ENCODE measurements at regions of chr3 and their contacts with region 1.

Region 1: GRCh38 chr3:195909644-195910508 is 1.5 kb upstream of the TNK2 start:
- DNase-seq: peak; percentile 79 to 95 (median 90)
- ATAC-seq: peak; percentile 61
- H3K4me3 ChIP-seq: peak overlapping the region; percentile 32 to 52
- H3K4me3 Mint-ChIP-seq: peak overlapping the region; percentile 77
- H3K27ac ChIP-seq: peak overlapping the region; percentile 35 to 51
- H3K27ac Mint-ChIP-seq: peak overlapping the region; percentile 78
- H3K4me1 ChIP-seq: peaks cover 37% of the 10 kb centered on the region
- H3K4me1 Mint-ChIP-seq: peaks cover 36% of the 10 kb centered on the region
- H3K27me3 ChIP-seq: no peaks in the 10 kb centered on the region
- H3K27me3 Mint-ChIP-seq: no peaks in the 10 kb centered on the region
- CTCF ChIP-seq: no peak

Region 2: GRCh38 chr3:195748661-195749060 is 161.2 kb before region 1 on chr3:
- CTCF ChIA-PET with region 1: no interaction called
- POLR2A ChIA-PET with region 1: interaction called, 3 read pairs
- intact Hi-C with region 1: loop called in 1 of 2 experiments (anchors 5 kb)
- DNase-seq: peak in 1 of 9 experiments; percentile 25
- ATAC-seq: no peak
- H3K4me3 ChIP-seq: no peak overlapping the region
- H3K4me3 Mint-ChIP-seq: no peak overlapping the region
- H3K27ac ChIP-seq: no peak overlapping the region
- H3K27ac Mint-ChIP-seq: no peak overlapping the region
- H3K4me1 ChIP-seq: peaks cover 9% of the 10 kb centered on the region
- H3K4me1 Mint-ChIP-seq: peaks cover 9% of the 10 kb centered on the region
- H3K27me3 ChIP-seq: peaks cover 0 to 4% of the 10 kb centered on the region in 2 experiments
- H3K27me3 Mint-ChIP-seq: peaks cover 6% of the 10 kb centered on the region
- CTCF ChIP-seq: no peak

Region 3: GRCh38 chr3:195863121-195864006 is 46.5 kb before region 1 on chr3:
- CTCF ChIA-PET with region 1: interaction called, 208 read pairs
- POLR2A ChIA-PET with region 1: interaction called, 4 read pairs
- intact Hi-C with region 1: loop called (anchors 1 kb)
- DNase-seq: peak; percentile 36 to 77 (median 66)
- ATAC-seq: peak; percentile 78
- H3K4me3 ChIP-seq: no peak overlapping the region
- H3K4me3 Mint-ChIP-seq: no peak overlapping the region
- H3K27ac ChIP-seq: no peak overlapping the region
- H3K27ac Mint-ChIP-seq: no peak overlapping the region
- H3K4me1 ChIP-seq: peaks cover 4% of the 10 kb centered on the region
- H3K4me1 Mint-ChIP-seq: peaks cover 4% of the 10 kb centered on the region
- H3K27me3 ChIP-seq: no peaks in the 10 kb centered on the region
- H3K27me3 Mint-ChIP-seq: no peaks in the 10 kb centered on the region
- CTCF ChIP-seq: peak; percentile 57

Region 4: DNA sequence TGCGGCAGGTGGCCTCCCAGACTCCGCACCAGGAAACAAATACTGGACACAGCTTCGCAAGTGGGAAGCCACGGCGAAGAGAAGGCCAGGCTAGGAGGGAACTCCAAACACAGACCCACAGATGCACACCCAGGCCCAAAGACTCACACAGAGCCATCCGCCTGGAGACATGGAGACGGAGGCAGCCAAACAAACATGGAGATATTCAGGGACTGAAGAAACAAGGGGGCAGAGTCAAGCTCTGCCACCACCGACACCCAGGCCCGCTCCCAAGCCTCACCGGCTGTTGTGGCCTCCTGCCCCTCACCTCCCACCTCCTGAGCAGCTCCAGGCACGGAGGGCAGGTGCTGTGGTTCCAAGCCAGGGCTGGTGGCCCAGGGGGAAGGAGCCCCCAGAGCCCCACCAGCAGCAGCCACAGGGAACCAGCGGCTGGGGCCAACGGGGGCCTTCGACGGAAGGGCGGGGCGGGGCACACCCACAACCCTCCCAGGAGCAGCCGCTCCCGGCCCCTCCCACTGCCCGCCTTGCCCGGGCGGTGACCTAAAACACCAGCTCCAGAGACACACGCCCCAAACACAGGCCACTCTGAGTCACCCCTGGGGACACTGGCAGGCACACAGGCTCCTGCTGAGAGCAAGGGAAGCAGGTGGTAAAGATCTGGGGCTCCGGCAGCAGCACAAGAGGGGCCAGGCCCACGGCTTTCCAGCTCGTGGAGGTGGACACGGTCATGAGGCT is 33.4 kb before region 1 on chr3:
- CTCF ChIA-PET with region 1: interaction called, 15 read pairs
- POLR2A ChIA-PET with region 1: no interaction called
- intact Hi-C with region 1: no loop called
- DNase-seq: peak in 1 of 9 experiments; percentile 32
- ATAC-seq: no peak
- H3K4me3 ChIP-seq: no peak overlapping the region
- H3K4me3 Mint-ChIP-seq: no peak overlapping the region
- H3K27ac ChIP-seq: no peak overlapping the region
- H3K27ac Mint-ChIP-seq: no peak overlapping the region
- H3K4me1 ChIP-seq: no peaks in the 10 kb centered on the region
- H3K4me1 Mint-ChIP-seq: no peaks in the 10 kb centered on the region
- H3K27me3 ChIP-seq: no peaks in the 10 kb centered on the region
- H3K27me3 Mint-ChIP-seq: no peaks in the 10 kb centered on the region
- CTCF ChIP-seq: no peak

Region 5: DNA sequence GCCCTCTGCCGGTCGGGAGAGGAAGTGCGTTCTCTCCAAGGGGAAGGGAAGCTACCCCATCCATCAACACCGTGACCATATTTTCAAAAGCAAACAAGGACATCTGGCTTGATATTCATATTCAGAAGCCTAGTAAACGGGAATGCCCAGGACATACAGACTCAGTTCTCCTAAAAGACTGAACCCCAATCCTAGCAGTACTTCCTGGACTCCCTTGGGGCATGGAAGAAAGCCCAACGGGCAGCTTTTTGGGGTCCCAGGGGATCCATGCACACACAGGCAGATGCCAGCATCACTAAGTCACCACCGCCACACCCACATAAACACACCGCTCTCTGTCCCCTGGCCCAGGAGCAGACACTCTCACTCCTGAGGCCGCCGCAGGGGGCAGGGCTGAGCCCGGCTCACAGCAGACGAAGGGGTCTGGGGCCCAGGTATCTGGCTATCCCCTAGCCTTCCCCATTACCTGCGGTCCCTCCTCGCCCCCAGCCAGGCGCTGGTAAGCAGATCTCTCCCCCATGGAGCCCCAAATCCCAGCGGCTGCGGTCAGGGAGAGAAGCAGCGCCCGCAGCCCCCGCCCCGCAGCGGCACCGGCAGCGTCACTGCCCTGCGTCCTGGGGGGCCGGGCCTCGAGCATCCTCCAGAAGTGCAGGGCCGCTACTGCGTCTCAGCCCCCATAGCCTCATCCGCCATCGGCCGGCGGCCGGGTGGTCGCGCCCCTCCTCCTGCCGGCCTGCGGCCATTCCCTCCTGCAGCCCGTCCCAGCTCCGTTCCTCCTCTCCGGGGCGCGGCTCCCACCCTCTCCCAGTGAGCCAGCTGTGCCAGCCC is 14.9 kb before region 1 on chr3:
- CTCF ChIA-PET with region 1: interaction called, 195 read pairs
- POLR2A ChIA-PET with region 1: interaction called, 86 read pairs
- intact Hi-C with region 1: loop called (anchors 1 kb)
- DNase-seq: peak; percentile 35 to 86 (median 74)
- ATAC-seq: peak; percentile 66
- H3K4me3 ChIP-seq: peak overlapping the region; percentile 56 to 76
- H3K4me3 Mint-ChIP-seq: peak overlapping the region; percentile 92
- H3K27ac ChIP-seq: peak overlapping the region; percentile 79 to 80
- H3K27ac Mint-ChIP-seq: peak overlapping the region; percentile 94
- H3K4me1 ChIP-seq: peaks cover 38% of the 10 kb centered on the region
- H3K4me1 Mint-ChIP-seq: peaks cover 44% of the 10 kb centered on the region
- H3K27me3 ChIP-seq: no peaks in the 10 kb centered on the region
- H3K27me3 Mint-ChIP-seq: no peaks in the 10 kb centered on the region
- CTCF ChIP-seq: peak; percentile 97

Measured in CD8-positive, alpha-beta T cell (primary cell).